HepG2 (cell line): ENCODE measurements at regions of chr14 and their contacts with region 1.

Region 1: DNA sequence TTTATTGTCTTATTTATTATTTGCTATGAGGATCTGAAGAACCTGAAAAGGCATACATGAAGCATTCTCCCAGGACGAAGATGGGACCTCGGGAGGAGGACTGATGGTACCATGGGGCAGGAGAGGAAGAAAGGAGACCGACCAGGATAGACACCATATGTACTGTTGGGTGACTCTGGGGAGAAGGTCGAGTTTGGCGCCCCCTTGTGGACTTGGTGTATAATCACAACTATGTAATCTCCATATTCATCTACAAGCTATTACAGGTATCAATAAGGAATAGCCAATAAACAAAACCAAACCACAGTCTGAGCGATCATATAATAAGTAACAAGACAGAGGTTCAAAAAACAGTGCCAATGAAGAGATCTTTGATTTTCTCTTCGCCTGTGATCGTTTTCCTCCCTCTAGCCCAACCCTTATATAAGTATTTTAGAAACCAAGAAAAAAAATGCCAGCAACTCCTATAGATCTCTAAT is 139.1 kb downstream of the SPTSSA start:
- DNase-seq: peak; percentile 87
- ATAC-seq: peak; percentile 87
- H3K4me3 ChIP-seq: no peak overlapping the region
- H3K27ac ChIP-seq: no peak overlapping the region
- H3K4me1 ChIP-seq: 0 out of 2 replicates have a peak, but pooled peaks cover 6% of the 10 kb centered on the region
- H3K27me3 ChIP-seq: no peaks in the 10 kb centered on the region
- CTCF ChIP-seq: peak; percentile 89
- EP300 ChIP-seq: no peak
- POLR2A ChIP-seq: no peak
- RAD21 ChIP-seq: peak; percentile 41; the same call in 1 of the 2 replicates

Region 2: DNA sequence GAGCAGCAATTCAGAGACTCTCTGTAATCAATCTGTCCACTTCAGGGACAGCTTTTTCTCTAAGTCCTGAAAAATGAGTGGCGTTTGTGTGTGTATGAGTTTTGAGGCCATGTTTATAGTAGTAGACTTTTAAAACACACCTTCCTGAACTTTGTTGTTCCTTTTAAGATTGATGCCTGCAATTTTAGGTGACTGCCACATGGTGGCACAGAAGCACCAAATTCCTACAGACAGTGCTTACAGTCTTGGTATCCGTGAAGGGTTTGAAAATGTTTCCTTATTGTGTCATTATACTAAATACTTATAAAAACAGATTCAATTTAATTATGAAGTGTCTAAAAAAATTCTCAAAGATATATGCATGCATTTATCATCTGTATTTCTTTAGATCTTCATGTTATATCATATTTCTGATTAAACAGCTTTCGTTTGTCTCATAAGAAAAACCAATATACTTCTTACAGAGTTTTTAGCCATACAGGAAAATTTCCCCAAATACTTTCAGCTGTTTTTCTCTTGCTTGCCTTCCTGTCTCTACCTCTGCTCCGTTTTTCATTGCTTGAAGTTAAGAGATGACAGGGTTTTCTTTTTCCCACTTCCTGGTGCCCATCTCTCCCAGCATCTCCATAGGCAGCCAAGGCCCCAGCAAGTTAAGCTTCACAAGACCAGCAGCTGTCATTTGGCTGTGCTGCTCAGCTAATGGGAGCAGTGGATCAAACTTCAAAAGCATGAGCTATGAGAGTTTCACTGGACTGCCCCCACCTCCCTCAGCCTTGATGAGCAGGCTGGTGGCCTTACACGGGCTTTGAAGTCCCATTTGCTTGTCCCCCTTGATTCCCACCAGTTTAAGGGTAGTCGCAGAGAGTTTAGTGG is 1734.3 kb before region 1 on chr14:
- CTCF ChIA-PET with region 1: interaction called, 10 read pairs
- POLR2A ChIA-PET with region 1: no interaction called
- in situ Hi-C with region 1: no loop called
- intact Hi-C with region 1: no loop called
- DNase-seq: peak; percentile 43
- ATAC-seq: peak; percentile 79
- H3K4me3 ChIP-seq: no peak overlapping the region
- H3K27ac ChIP-seq: no peak overlapping the region
- H3K4me1 ChIP-seq: no peaks in the 10 kb centered on the region
- H3K27me3 ChIP-seq: no peaks in the 10 kb centered on the region
- CTCF ChIP-seq: peak; percentile 88
- EP300 ChIP-seq: no peak
- POLR2A ChIP-seq: no peak
- RAD21 ChIP-seq: no peak; the same call in 1 of the 2 replicates

Region 3: GRCh38 chr14:33839193-33840076 is 483.5 kb before region 1 on chr14:
- CTCF ChIA-PET with region 1: interaction called, 24 read pairs
- POLR2A ChIA-PET with region 1: no interaction called
- in situ Hi-C with region 1: no loop called
- intact Hi-C with region 1: loop called (anchors 1 kb)
- DNase-seq: peak; percentile 58
- ATAC-seq: peak; percentile 85
- H3K4me3 ChIP-seq: no peak overlapping the region
- H3K27ac ChIP-seq: no peak overlapping the region
- H3K4me1 ChIP-seq: no peaks in the 10 kb centered on the region
- H3K27me3 ChIP-seq: peaks cover 5 to 26% of the 10 kb centered on the region in 2 experiments; a peak in 3 of 5 replicates
- CTCF ChIP-seq: peak; percentile 96
- EP300 ChIP-seq: no peak
- POLR2A ChIP-seq: no peak
- RAD21 ChIP-seq: peak; percentile 87

Region 4: DNA sequence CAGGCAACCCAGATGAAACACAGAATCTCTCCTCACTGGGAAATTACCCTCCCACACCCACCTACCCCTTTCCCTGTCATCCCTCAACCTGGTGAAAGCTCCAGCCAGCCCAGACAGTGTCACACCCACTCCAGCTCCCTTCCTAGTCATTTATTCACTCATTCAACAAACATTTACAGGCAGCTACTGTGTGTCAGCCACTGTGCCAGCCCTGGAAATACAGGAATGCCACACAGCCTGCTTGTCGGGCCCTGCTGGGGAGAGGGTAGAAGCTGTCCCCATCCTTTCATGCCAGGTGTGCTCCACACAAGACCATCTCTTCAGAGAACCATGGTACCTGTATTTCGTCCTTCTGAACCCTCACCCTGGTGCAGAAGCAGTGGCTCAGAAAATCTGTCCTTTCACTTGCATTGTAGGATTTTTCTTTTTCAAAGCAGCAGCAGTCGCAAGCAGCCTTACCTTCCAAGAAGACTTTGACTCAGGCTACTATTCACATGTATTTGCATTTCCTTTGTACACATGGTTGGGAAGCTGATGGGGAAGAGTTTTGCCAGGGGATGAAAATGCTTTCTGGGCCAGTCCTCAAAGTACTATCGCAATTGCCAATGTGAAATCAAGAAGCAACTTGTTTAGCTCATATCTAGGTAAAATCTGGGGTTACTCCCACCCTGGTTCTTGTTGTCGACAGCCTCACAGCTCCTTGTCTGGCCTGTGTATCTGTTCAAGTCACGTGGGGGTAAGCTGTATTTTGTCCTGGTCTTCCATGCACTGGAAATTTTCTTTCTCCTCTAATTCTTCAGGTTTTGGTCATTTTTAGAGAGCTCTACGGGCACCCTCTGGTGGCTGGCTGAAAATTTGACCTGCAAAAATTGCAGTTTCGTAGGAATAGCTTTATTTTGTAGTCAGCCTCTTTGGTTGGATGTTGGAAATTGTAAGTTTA is 224.7 kb before region 1 on chr14:
- CTCF ChIA-PET with region 1: no interaction called
- POLR2A ChIA-PET with region 1: no interaction called
- in situ Hi-C with region 1: no loop called
- intact Hi-C with region 1: loop called (anchors 1 kb)
- DNase-seq: peak; percentile 68
- ATAC-seq: peak; percentile 66
- H3K4me3 ChIP-seq: 0 out of 6 replicates have a peak overlapping the region, but pooled peaks of 1 of the 3 experiments have one; percentile 0
- H3K27ac ChIP-seq: no peak overlapping the region
- H3K4me1 ChIP-seq: peaks cover 29% of the 10 kb centered on the region
- H3K27me3 ChIP-seq: peaks cover 0 to 33% of the 10 kb centered on the region in 2 experiments; a peak in 2 of 5 replicates
- CTCF ChIP-seq: peak; percentile 91
- EP300 ChIP-seq: no peak; a peak in 1 of 4 replicates
- POLR2A ChIP-seq: no peak
- RAD21 ChIP-seq: peak; percentile 95; the same call in 1 of the 2 replicates

Region 5: DNA sequence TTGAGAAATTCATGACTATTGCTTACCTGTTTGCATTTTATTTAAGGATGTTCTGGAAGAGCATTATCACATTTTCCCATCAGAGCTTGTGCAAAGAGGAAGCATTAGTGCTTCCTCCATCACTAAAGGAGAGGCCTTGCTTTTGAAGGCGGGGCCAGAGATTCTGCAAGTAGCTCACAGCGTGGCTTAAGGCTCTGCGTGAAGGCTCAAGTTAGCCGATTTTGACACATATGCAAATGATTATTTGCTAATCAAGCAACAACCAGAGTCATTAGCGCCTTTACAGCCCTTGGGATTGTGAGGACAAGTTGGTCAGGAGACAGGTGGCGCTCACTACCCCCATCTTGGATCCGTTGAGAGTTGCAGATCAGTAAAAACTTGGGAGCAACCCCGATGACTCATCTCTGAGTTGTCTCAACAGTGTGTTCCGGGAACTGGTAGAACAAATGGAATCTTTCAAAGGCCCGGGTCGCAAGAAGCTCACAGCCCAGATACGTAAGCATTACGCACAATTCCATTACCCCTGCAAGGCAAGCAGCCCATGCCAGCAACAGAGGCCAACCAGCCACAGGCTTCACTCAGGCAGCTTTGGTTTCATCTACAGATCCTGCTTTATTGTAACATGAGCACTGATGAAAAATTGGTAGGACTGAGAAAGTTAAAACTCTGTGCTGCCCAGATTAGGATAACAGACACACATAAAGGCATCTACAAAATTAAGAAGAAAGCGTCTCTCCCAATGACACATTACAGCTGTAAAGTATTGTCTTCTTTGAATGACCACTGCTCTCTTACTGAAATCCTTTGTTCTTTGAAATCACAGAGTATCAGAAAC is 173.9 kb after region 1 on chr14:
- CTCF ChIA-PET with region 1: interaction called, 19 read pairs
- POLR2A ChIA-PET with region 1: no interaction called
- in situ Hi-C with region 1: no loop called
- intact Hi-C with region 1: no loop called
- DNase-seq: peak; percentile 99
- ATAC-seq: peak; percentile 71
- H3K4me3 ChIP-seq: peak overlapping the region; percentile 6 to 56 (median 15)
- H3K27ac ChIP-seq: peak overlapping the region; percentile 86
- H3K4me1 ChIP-seq: peaks cover 68% of the 10 kb centered on the region
- H3K27me3 ChIP-seq: no peaks in the 10 kb centered on the region
- CTCF ChIP-seq: peak; percentile 80
- EP300 ChIP-seq: peak; percentile 81 to 88
- POLR2A ChIP-seq: peak in 1 of 2 experiments; percentile 76; a peak in 1 of 4 replicates
- RAD21 ChIP-seq: peak; percentile 51; the same call in 1 of the 2 replicates